ENCODE measurements at regions of chr16 and their contacts with region 1.

Region 1: DNA sequence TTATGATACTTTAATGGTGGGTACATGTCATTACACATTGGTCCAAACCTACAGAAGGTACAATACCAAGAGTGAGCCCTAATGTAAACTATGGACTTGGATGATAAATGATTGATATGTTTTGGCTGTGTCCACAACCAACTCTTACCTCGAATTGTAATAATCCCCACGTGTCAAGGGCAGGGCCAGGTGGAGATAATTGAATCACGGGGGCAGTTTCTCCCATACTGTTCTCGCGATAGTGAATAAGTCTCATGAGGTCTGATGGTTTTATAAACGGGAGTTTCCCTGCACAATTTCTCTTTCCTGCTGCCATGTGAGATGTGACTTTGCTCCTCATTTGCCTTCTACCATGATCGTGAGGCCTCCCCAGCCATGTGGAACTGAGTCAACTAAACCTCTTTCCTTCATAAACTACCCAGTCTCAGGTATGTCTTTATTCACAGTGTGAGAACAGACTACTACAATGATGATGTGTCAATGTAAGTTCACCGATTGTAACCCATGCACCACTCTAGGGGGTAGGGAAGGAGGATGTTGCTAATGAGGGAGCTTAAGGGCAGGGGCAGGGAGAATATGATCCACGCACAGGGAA is 7.0 kb upstream of the METTL22 start:
- DNase-seq: peak in 1 of 3 donors; percentile 25
- H3K4me3 ChIP-seq: no peak overlapping the region
- H3K4me3 Mint-ChIP-seq: no peak overlapping the region
- H3K27ac ChIP-seq: no peak overlapping the region
- H3K27ac Mint-ChIP-seq: peak overlapping the region in 1 of 7 donors; percentile 2
- H3K4me1 ChIP-seq: no peaks in the 10 kb centered on the region
- H3K4me1 Mint-ChIP-seq: no peaks in the 10 kb centered on the region
- H3K27me3 ChIP-seq: peaks cover 19 to 21% of the 10 kb centered on the region in 2 donors
- H3K27me3 Mint-ChIP-seq: peaks cover 35 to 64% (median 43%) of the 10 kb centered on the region in 3 donors
- CTCF ChIP-seq: no peak

Region 2: GRCh38 chr16:8655184-8655717 is 40.7 kb after region 1 on chr16:
- intact Hi-C with region 1: loop called in 1 of 2 experiments (anchors 2 kb)
- DNase-seq: peak; percentile 50 to 64 (median 52)
- H3K4me3 ChIP-seq: no peak overlapping the region
- H3K4me3 Mint-ChIP-seq: no peak overlapping the region
- H3K27ac ChIP-seq: no peak overlapping the region
- H3K27ac Mint-ChIP-seq: peak overlapping the region in 2 of 7 donors; percentile 27 to 34
- H3K4me1 ChIP-seq: no peaks in the 10 kb centered on the region
- H3K4me1 Mint-ChIP-seq: peaks cover 7% of the 10 kb centered on the region
- H3K27me3 ChIP-seq: no peaks in the 10 kb centered on the region
- H3K27me3 Mint-ChIP-seq: no peaks in the 10 kb centered on the region
- CTCF ChIP-seq: no peak